ENCODE measurements at regions of chr7 and their contacts with region 1.

Region 1: DNA sequence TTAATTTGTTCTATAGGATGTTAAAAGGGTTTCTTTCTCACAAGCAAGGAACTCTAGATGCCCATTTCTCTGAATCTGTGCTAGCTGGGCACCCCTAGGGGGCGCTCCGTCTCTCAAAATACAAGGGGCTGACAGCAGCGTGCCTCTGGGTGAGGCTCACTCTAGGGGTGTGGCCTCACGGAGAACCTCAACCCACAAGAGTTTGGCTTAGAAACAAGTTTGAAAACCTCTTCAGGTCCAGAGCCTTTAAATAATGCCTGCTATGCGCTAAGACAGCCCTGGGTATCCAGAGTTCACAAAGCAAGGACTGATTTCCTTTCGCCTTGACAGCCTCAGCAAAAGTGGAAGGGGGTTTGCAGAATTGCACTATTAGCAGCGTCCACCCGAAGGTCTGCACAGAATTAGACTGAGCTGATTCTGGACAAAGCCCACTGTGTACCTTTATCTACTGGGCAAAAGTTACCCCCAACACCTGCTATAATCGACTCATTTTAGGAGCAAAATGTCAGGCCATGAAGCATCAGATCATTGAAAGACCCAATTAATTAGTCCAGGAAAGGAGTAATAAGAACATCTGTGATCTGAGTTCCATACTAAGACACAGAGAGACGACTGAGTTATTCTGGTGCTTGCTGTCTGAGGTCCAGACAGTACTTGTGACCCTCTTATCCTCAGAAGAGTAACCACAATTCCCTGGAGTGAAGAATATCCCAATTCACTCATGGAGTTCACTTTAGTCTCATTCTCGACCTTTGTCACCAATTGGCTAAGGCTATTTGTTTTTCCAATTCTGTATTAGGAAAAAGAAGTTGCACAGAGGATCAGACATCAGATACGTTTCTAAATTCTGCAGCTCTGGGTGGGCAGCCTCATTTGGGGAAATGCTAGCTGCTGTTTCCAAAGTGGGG is 574 bp upstream of the CPED1 start:
- DNase-seq: peak; percentile 96
- H3K4me3 ChIP-seq: peak overlapping the region; percentile 56 to 63 (median 60)
- H3K27ac ChIP-seq: peak overlapping the region; percentile 85 to 87 (median 86)
- H3K4me1 ChIP-seq: peaks cover 3 to 49% (median 46%) of the 10 kb centered on the region in 4 donors
- H3K27me3 ChIP-seq: no peaks in the 10 kb centered on the region
- CTCF ChIP-seq: peak; percentile 93 to 95 (median 95)
- EP300 ChIP-seq: no peak
- POLR2A ChIP-seq: no peak

Region 2: GRCh38 chr7:120950539-120951308 is 37.2 kb before region 1 on chr7 and contains the start of gene ING3:
- intact Hi-C with region 1: loop called (anchors 5 kb)
- DNase-seq: peak; percentile 99
- H3K4me3 ChIP-seq: peak within 1 kb of the TSS; percentile 62 to 75 (median 67)
- H3K27ac ChIP-seq: peak within 1 kb of the TSS; percentile 95 to 98 (median 95)
- H3K4me1 ChIP-seq: peaks cover 11 to 28% (median 25%) of the 10 kb centered on the region in 4 donors
- H3K27me3 ChIP-seq: no peaks in the 10 kb centered on the region
- CTCF ChIP-seq: no peak
- EP300 ChIP-seq: no peak
- POLR2A ChIP-seq: no peak
- total RNA-seq, gene ING3: 12.6 to 19.4 (median 14.9) TPM

Region 3: DNA sequence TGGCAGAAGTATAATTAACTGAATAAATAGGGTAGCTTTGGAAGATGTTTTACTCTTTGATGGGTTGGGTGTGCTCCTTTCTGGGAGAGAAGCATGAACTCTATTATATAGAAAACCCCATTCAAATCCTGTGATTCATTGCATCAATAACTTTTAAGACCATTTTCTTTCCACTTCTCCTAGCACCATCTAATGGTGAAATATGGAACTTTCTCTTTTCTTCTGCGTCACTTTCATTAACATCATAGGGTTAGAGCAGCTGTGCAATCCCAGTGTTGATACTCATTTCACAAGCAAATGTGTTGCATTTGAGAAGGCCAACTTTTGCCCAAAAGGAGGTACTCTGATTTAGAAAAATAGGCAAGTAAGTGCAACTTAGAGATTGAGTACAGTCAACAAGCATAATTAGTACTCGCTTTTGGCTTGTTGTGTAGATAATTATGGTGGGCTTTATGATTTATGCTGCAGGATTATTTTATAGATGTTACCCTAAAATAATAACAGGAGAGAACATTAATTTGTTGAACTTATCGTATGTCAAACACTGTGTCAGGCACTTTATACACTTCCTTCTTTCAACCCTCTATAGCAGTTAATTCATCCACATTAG is 93.5 kb after region 1 on chr7:
- intact Hi-C with region 1: loop called (anchors 2 kb)
- DNase-seq: no peak
- H3K4me3 ChIP-seq: no peak overlapping the region
- H3K27ac ChIP-seq: peak overlapping the region in 3 of 4 donors; percentile 23 to 54 (median 52)
- H3K4me1 ChIP-seq: peaks cover 33 to 48% (median 43%) of the 10 kb centered on the region in 4 donors
- H3K27me3 ChIP-seq: no peaks in the 10 kb centered on the region
- CTCF ChIP-seq: peak; percentile 77 to 81 (median 78)
- EP300 ChIP-seq: no peak
- POLR2A ChIP-seq: no peak

Region 4: DNA sequence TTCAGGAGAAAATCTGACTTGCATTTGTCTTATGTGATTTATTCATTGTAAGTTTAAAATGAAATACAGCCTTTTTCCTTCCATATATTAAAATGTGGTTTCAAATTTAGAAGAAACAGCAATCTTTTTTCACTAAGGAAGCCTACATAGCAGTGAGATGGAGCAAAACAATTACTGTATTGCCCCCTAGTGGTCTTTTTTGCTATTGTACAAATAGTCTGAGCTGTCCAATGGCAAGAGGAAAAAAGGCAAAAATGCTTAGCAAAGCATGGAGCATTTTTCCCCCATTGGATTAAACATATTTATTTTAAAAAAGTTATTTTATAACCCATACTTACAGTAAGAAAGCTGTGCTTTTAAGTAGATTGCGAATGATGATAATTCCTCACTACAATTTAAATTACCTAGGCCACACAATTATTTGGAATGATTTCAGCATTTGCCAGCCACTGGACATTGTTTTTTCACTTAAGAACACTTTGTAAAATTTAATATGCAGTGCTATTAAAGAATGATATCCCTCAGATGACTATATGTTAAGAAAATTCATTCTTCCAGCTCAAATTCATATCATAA is 120.1 kb after region 1 on chr7:
- intact Hi-C with region 1: loop called (anchors 2 kb)
- DNase-seq: no peak
- H3K4me3 ChIP-seq: no peak overlapping the region
- H3K27ac ChIP-seq: no peak overlapping the region
- H3K4me1 ChIP-seq: peaks cover 0 to 4% (median 2%) of the 10 kb centered on the region in 4 donors
- H3K27me3 ChIP-seq: no peaks in the 10 kb centered on the region
- CTCF ChIP-seq: peak; percentile 71 to 80 (median 78)
- EP300 ChIP-seq: no peak
- POLR2A ChIP-seq: no peak

Region 5: GRCh38 chr7:121153995-121154394 is 166.1 kb after region 1 on chr7:
- intact Hi-C with region 1: no loop called
- DNase-seq: no peak
- H3K4me3 ChIP-seq: no peak overlapping the region
- H3K27ac ChIP-seq: no peak overlapping the region
- H3K4me1 ChIP-seq: no peaks in the 10 kb centered on the region
- H3K27me3 ChIP-seq: no peaks in the 10 kb centered on the region
- CTCF ChIP-seq: no peak
- EP300 ChIP-seq: no peak
- POLR2A ChIP-seq: no peak

Region 6: DNA sequence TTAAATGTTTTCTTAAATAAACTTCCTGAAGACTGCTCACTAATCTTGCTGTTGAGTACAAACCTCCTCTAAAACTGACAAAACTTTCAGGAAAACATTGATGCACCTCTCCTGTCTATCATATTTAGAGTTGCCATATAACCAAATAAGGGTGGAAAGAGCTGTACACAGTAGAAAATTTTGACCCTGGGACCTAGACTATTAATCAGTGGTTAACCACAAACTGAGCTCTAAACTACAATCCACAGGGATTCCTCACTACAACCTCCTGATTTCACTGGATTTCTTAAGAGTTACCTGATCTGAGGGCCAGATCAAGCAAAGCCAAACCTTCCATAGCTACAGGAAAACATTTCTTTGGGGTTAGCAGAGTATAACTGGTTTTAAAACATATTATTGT is 301.0 kb after region 1 on chr7:
- intact Hi-C with region 1: no loop called
- DNase-seq: no peak
- H3K4me3 ChIP-seq: no peak overlapping the region
- H3K27ac ChIP-seq: no peak overlapping the region
- H3K4me1 ChIP-seq: no peaks in the 10 kb centered on the region
- H3K27me3 ChIP-seq: no peaks in the 10 kb centered on the region
- CTCF ChIP-seq: no peak
- EP300 ChIP-seq: no peak
- POLR2A ChIP-seq: no peak

Measured in esophagus muscularis mucosa (tissue), 4 donors.